Panc1 (cell line): ENCODE measurements at regions of chr7 and their contacts with region 1.

Region 1: DNA sequence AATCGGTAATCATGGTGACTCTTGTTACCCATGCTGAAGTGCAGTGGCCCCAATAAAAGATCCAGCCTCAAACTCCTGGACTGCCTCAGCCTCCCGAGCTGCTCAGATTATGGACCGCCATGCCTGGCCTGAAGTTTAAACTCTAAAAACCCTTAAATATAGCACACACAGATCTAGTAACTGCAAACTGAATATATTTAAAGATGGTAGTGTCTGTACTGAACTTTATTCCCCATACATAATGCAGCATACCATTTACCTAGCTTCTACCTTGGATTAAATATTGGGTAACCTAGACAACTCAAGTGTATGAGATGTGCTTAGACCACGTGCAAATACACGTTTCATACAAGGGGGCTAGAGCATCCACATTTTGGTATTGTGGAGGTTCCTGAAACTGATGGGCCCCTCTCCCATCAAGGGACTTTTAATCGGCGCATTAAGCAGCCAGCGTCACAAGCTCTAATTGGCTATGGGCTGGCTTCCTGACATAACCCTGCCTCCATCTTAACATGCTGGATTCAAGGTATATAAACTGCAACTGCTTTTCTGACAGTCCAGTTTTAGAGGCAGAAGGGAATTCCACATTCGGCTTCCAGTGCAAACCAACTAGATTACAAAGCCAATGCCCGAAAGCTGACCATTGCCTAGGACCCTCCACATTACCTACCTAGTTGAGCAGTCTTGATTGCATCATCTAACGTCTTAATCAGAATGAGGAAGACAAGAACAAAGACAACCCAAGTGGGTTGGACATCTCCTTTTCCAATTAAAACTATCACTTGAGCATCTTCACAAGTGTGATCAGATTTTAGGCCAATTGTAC is 13.0 kb downstream of the HNRNPA2B1 start:
- DNase-seq: no peak
- ATAC-seq: peak; percentile 28
- H3K4me3 ChIP-seq: no peak overlapping the region
- H3K27ac ChIP-seq: peak overlapping the region; percentile 87
- H3K4me1 ChIP-seq: peaks cover 92% of the 10 kb centered on the region
- H3K27me3 ChIP-seq: no peaks in the 10 kb centered on the region
- CTCF ChIP-seq: no peak

Region 2: GRCh38 chr7:25552998-25553397 is 634.6 kb before region 1 on chr7:
- CTCF ChIA-PET with region 1: no interaction called
- POLR2A ChIA-PET with region 1: no interaction called
- in situ Hi-C with region 1: no loop called
- intact Hi-C with region 1: no loop called
- DNase-seq: no peak
- ATAC-seq: no peak
- H3K4me3 ChIP-seq: no peak overlapping the region
- H3K27ac ChIP-seq: no peak overlapping the region
- H3K4me1 ChIP-seq: no peaks in the 10 kb centered on the region
- H3K27me3 ChIP-seq: peaks cover 6% of the 10 kb centered on the region; the same call in 1 of the 2 replicates
- CTCF ChIP-seq: no peak

Region 3: GRCh38 chr7:25968205-25968993 is 219.2 kb before region 1 on chr7:
- CTCF ChIA-PET with region 1: no interaction called
- POLR2A ChIA-PET with region 1: interaction called, 12 read pairs
- in situ Hi-C with region 1: no loop called
- intact Hi-C with region 1: no loop called
- DNase-seq: no peak
- ATAC-seq: no peak; the same call in 1 of the 2 replicates
- H3K4me3 ChIP-seq: no peak overlapping the region
- H3K27ac ChIP-seq: no peak overlapping the region
- H3K4me1 ChIP-seq: no peaks in the 10 kb centered on the region
- H3K27me3 ChIP-seq: peaks cover 19% of the 10 kb centered on the region
- CTCF ChIP-seq: no peak

Region 4: GRCh38 chr7:26090927-26091519 is 96.6 kb before region 1 on chr7:
- CTCF ChIA-PET with region 1: interaction called, 4 read pairs
- POLR2A ChIA-PET with region 1: interaction called, 6 read pairs
- in situ Hi-C with region 1: no loop called
- intact Hi-C with region 1: loop called (anchors 5 kb)
- DNase-seq: peak; percentile 67
- ATAC-seq: peak; percentile 89
- H3K4me3 ChIP-seq: no peak overlapping the region
- H3K27ac ChIP-seq: peak overlapping the region; percentile 32; the same call in 1 of the 2 replicates
- H3K4me1 ChIP-seq: peaks cover 6% of the 10 kb centered on the region; the same call in 1 of the 2 replicates
- H3K27me3 ChIP-seq: no peaks in the 10 kb centered on the region
- CTCF ChIP-seq: peak; percentile 88

Region 5: DNA sequence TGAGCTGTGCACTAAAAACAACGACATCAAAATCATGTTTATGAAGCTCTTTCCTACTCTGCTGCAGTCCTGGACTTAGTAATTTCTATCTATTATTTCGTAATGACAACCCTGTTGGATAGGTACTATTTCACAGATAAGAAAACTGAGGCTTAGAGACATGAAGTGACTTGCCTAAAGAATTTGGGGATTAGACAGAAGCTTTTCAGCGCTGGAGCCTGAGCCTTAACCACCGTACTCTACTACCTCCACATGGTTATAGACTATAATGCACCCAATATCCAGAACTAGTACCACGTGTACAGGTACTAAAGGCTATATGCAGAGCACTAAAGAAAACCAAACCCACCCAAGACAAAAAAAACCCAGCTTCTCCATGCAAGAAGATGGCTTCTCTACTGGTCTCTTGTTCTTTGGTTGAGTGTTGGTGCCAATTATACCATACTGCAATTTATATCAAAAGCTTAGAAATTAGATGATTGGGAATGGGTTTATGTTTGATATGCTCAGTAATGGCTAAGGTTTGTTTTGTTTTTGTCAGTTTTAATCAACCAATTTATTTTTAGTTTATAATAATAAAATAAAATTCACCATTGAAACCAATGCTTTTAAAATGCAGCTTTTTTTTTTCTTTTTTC is 97.5 kb after region 1 on chr7:
- CTCF ChIA-PET with region 1: no interaction called
- POLR2A ChIA-PET with region 1: interaction called, 3 read pairs
- in situ Hi-C with region 1: no loop called
- intact Hi-C with region 1: loop called (anchors 10 kb)
- DNase-seq: peak; percentile 54
- ATAC-seq: peak; percentile 95
- H3K4me3 ChIP-seq: no peak overlapping the region
- H3K27ac ChIP-seq: no peak overlapping the region
- H3K4me1 ChIP-seq: no peaks in the 10 kb centered on the region
- H3K27me3 ChIP-seq: no peaks in the 10 kb centered on the region
- CTCF ChIP-seq: peak; percentile 77